Sigmoid colon (tissue), 7 donors: ENCODE measurements at regions of chr11 and their contacts with region 1.

Region 1: DNA sequence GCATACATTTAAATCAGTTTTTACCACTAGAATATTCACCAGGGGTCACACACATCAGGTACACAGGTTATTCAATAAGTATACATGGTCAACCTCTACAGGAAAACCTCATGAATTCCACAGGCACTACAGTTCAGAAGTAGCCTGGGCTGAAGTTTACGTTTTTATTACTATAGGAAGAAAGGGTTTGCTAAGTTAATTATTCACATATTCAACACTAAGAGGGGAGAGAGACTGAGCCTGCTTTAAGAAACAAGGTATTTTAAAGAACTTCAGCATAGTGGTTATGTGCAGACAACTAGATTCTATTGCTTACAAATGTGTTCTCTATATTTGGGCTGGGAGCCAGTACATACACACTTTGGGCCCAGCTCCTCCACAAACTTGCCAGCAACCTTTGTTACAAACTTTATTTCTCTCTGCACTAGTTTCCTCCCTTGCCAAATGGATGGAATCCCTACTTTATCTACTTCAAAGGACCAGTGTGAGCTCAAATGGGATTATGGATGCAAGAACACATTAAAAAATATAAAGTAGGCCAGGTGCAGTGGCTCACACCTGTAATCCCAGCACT is 31.9 kb downstream of the IL18BP start:
- DNase-seq: no peak
- H3K4me3 ChIP-seq: no peak overlapping the region
- H3K27ac ChIP-seq: peak overlapping the region in 3 of 4 donors; percentile 9 to 24 (median 11)
- H3K4me1 ChIP-seq: peaks cover 0 to 99% (median 81%) of the 10 kb centered on the region in 4 donors
- H3K27me3 ChIP-seq: no peaks in the 10 kb centered on the region
- CTCF ChIP-seq: no peak
- EP300 ChIP-seq: no peak
- POLR2A ChIP-seq: no peak

Region 2: GRCh38 chr11:72091005-72091691 is 60.6 kb after region 1 on chr11:
- intact Hi-C with region 1: loop called (anchors 1 kb)
- DNase-seq: peak; percentile 83
- H3K4me3 ChIP-seq: no peak overlapping the region
- H3K27ac ChIP-seq: peak overlapping the region; percentile 14 to 62 (median 58)
- H3K4me1 ChIP-seq: peaks cover 0 to 13% (median 10%) of the 10 kb centered on the region in 4 donors
- H3K27me3 ChIP-seq: no peaks in the 10 kb centered on the region
- CTCF ChIP-seq: peak; percentile 88 to 94 (median 90)
- EP300 ChIP-seq: no peak
- POLR2A ChIP-seq: no peak

Region 3: GRCh38 chr11:72144807-72145560 is 114.4 kb after region 1 on chr11:
- intact Hi-C with region 1: loop called (anchors 5 kb)
- DNase-seq: no peak
- H3K4me3 ChIP-seq: no peak overlapping the region
- H3K27ac ChIP-seq: no peak overlapping the region
- H3K4me1 ChIP-seq: no peaks in the 10 kb centered on the region
- H3K27me3 ChIP-seq: no peaks in the 10 kb centered on the region
- CTCF ChIP-seq: no peak
- EP300 ChIP-seq: no peak
- POLR2A ChIP-seq: no peak

Region 4: DNA sequence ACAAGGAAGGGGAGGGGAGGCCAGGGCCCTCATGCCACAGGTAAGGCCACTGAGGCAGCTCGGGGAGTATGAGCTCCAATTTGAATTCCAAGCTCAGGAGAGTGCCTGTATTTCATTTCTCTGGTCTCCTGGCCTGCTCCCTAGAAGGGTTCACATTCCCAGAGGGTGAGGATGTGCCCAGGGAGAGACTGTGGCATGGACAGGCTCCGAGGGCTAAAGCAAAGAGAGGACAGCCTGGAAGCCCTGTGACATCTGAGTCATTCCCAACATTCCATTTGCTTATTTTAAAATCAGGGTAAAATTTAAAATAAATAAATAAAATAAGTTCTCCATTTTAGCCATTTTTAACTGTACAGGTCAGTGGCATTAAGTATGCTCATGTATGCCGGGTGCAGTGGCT is 142.7 kb after region 1 on chr11:
- intact Hi-C with region 1: no loop called
- DNase-seq: no peak
- H3K4me3 ChIP-seq: no peak overlapping the region
- H3K27ac ChIP-seq: no peak overlapping the region
- H3K4me1 ChIP-seq: no peaks in the 10 kb centered on the region
- H3K27me3 ChIP-seq: peaks cover 0 to 4% (median 0%) of the 10 kb centered on the region in 3 donors
- CTCF ChIP-seq: no peak
- EP300 ChIP-seq: no peak
- POLR2A ChIP-seq: no peak